Left cardiac atrium (tissue), 4 donors: ENCODE measurements at regions of chr6 and their contacts with region 1.

Region 1: DNA sequence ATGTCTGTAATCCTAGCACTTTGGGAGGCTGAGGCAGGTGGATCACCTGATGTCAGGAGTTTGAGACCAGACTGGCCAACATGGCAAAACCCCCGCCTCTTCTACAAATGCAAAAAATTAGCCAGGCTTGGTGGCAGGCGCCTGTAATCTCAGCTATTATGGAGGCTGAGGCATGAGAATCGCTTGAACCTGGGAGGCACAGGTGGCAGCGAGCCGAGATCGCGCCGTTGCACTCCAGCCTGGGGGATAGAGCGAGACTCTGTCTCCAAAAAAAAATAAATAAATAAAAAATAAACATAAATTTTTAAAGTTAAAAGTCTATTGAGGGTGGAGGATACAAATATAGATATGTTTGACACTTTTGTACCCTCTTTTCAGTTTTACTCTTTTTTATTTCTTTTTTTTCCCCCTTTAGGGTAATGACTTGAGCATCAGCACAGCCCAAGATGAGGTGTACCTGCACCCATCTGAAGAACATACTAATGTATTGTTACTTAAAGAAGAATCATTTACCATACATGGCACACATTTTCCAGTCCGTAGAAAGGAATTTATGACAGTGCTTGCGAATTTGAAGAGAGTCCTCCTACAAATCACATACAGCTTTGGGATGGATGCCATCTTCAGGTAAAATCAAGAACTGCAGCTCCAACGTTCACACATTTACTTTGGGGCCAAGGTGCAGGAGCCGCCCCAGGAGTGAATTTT is 368.9 kb downstream of the LAMA2 start:
- DNase-seq: no peak
- ATAC-seq: peak; percentile 64 to 69

Region 2: DNA sequence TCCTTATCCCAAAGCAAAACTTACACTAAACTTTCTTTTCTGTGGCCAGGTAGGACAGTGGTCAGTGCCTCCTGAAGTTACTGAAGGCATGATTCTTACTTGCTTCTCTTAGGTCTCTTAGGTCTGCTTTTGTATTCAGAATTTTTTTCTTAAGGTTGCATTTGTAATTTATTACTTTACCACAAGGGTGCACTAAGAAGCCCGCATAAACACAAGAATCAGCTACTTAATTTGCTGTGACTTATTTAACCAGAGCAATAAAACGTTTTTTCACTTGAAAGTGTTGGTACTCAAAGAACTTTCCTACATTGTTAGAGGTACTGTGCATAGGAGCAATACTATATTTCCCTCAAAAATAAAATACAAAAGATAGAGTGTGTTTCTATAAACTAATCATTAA is 444.2 kb before region 1 on chr6:
- intact Hi-C with region 1: loop called in 1 of 2 experiments (anchors 5 kb)
- DNase-seq: no peak
- ATAC-seq: no peak

Region 3: DNA sequence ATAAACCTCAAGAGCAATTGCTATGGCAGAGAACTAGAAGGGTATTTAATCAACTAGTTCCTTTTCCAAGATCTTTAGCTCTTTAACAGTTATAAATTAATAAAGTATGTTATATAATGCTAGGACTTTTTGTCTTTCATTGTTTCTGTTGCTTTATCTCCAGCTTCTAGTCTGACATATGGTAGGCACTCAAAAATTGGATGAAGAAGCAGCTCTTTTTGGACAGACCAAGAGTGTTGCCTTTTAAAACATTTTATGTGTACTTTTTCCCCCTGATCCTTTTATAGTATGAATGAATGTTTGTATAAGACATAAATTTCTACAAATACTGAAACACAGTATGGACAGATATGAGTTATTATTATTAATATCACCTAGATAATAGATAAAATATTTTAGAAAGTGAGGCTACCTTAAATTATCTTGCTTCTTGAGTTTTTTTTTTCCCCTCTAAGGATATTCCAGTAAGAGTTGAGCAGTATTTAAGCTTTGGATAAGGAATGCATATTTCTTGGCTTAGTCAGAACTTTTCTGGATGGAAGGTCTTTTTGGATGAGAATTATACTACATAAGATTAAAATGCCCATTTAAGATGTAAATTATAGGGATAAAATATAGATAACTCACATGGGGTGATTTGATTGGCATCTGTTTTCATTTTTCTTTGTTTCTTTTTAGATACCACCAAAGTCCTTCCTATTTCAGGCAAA is 352.3 kb before region 1 on chr6:
- intact Hi-C with region 1: loop called in 1 of 2 experiments (anchors 10 kb)
- DNase-seq: no peak
- ATAC-seq: no peak

Region 4: DNA sequence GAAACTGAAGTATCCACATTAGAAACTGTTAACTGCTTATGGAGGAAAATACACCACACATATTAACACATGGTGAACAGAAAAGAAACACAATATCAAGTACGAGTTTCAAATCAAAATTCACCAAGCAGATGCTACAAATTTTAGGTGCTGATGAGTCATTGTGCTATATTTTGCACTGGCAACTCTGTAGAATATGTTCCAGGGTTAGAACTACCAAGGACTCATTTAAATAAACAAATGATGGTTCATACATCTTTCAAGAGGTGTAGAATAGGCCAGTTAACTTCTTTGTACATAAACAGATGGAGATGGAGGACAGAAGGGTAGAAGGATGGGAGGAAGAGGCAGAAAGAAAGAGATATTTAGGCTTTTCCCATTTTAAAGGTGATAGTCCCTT is 273.2 kb after region 1 on chr6:
- intact Hi-C with region 1: no loop called
- DNase-seq: no peak
- ATAC-seq: no peak